Uterus (tissue), 4 donors: ENCODE measurements at regions of chr10 and their contacts with region 1.

Region 1: DNA sequence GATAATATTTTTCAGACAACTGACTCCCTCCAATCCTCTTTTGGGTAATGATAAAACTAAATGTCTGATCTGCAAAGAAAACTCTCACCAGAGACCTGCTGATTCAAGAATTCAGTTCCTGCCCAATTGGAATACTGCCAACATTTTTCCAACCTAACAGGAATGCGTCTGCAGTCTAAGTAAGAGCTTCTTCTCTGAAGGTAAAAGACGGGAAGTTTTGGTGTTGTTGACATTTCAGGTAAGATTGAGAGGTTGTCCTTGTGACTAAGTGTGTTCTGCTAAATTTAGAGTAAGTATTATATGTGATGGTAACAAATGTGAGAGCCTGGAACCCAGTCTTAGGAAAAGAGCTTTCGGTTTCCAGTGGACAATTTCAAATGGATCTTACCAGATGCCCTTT is 17.6 kb downstream of the IFIT5 start:
- DNase-seq: no peak
- H3K4me3 ChIP-seq: no peak overlapping the region
- H3K27ac ChIP-seq: no peak overlapping the region
- H3K4me1 ChIP-seq: no peaks in the 10 kb centered on the region
- H3K27me3 ChIP-seq: no peaks in the 10 kb centered on the region
- CTCF ChIP-seq: no peak
- POLR2A ChIP-seq: no peak

Region 2: DNA sequence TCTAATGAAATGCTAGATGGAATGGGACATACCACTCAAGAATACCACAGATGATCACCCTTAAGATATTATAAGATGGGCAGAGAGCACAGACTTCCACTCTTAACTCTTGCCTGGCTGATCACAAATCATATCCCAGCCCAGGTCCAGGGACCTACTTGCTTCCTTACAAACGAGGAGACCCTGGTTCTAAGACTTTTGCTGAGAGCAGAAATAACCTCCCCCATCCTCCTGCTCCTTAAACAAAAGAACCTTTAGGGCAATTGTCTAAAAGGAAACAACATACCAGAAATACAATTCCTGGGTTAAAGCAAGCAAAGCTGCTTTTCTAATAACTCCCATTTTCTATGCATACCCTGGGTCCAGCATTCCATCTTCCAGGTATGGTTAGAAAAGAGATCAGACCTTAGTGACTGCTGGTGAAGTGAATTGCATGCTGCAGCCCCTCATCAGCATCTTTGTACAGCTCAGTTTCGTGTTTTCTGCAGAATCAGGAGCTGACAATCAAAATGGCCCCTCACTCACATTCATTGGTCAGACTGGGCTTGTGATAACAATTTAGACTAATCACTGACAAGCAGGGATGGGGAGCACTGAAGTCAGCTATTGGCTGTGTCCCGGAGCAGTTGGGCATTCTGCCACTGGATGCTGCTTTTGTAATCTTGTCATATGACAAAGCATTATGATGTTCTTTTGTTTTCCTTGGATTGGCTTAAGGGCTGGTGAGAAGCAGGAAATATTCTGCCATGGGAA is 89.6 kb before region 1 on chr10:
- intact Hi-C with region 1: no loop called
- DNase-seq: peak; percentile 47 to 52
- H3K4me3 ChIP-seq: no peak overlapping the region
- H3K27ac ChIP-seq: peak overlapping the region in 1 of 2 donors; percentile 17
- H3K4me1 ChIP-seq: no peaks in the 10 kb centered on the region
- H3K27me3 ChIP-seq: no peaks in the 10 kb centered on the region
- CTCF ChIP-seq: no peak
- POLR2A ChIP-seq: no peak

Region 3: GRCh38 chr10:89563861-89564478 is 132.0 kb after region 1 on chr10:
- intact Hi-C with region 1: loop called (anchors 5 kb)
- DNase-seq: no peak
- H3K4me3 ChIP-seq: no peak overlapping the region
- H3K27ac ChIP-seq: no peak overlapping the region
- H3K4me1 ChIP-seq: no peaks in the 10 kb centered on the region
- H3K27me3 ChIP-seq: no peaks in the 10 kb centered on the region
- CTCF ChIP-seq: peak; percentile 75 to 84 (median 78)
- POLR2A ChIP-seq: no peak